ENCODE measurements at regions of chr19 and their contacts with region 1.

Region 1: GRCh38 chr19:30682999-30683536 is 310.9 kb downstream of the ZNF536 start:
- DNase-seq: peak; percentile 69 to 88 (median 88)
- ATAC-seq: peak; percentile 60 to 85
- H3K4me3 ChIP-seq: no peak overlapping the region
- H3K27ac ChIP-seq: no peak overlapping the region
- H3K4me1 ChIP-seq: no peaks in the 10 kb centered on the region
- H3K27me3 ChIP-seq: no peaks in the 10 kb centered on the region

Region 2: GRCh38 chr19:30471441-30471840 is 211.6 kb before region 1 on chr19:
- intact Hi-C with region 1: no loop called
- DNase-seq: no peak
- ATAC-seq: no peak
- H3K4me3 ChIP-seq: no peak overlapping the region
- H3K27ac ChIP-seq: no peak overlapping the region
- H3K4me1 ChIP-seq: no peaks in the 10 kb centered on the region
- H3K27me3 ChIP-seq: no peaks in the 10 kb centered on the region

Region 3: DNA sequence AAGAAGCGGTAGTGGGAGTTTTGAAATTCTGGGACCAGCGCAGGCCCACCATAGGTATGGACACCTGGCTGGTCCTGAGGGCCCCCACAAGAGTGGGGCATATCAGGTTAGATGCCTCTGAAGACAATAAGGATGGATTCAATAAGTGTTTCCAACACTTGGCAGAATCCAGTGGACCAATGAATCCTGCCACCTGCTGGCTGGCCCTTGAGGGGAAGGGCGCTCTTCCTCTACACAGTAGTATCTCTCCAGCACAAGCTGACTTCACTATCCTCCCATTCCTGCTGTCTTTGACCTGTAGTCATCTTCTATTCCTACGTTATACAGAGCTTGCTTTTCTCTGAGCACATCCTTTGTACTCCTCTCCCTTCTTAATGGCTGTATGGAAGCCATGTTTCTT is 865.9 kb after region 1 on chr19:
- intact Hi-C with region 1: loop called in 2 of 4 experiments (anchors 5 to 10 kb)
- DNase-seq: peak; percentile 27 to 59 (median 56)
- ATAC-seq: no peak
- H3K4me3 ChIP-seq: no peak overlapping the region
- H3K27ac ChIP-seq: no peak overlapping the region
- H3K4me1 ChIP-seq: no peaks in the 10 kb centered on the region
- H3K27me3 ChIP-seq: no peaks in the 10 kb centered on the region

Region 4: DNA sequence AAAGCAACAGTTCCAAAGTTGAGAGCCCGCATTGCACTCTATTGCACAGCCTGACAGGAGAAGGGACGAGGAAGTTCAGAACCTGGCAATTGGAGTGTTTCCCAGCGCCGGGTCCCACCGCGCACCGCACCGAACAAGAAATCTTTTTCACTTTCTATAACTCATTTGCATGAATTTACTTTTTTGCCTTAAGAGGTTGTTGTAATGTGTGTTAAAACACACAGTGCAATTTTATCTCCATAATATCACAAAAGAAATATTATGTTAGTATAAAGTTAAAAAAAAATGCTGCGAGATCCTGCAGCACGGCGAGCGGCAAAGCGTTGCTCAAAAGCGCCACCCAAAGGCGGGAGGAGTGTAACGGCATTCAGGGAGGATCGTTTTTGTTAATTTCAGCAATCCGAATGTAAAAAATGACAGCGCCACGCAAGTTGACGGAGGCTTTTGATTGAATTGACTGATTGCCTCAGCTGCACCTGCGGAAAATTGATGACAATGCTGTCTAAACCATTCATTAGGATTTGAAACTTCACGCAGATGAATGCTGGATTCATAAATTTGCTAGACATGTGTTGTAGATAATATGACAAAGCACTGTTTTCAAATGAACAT is 1358.7 kb after region 1 on chr19:
- intact Hi-C with region 1: loop called in 2 of 4 experiments (anchors 10 kb)
- DNase-seq: peak; percentile 44 to 65 (median 58)
- ATAC-seq: no peak
- H3K4me3 ChIP-seq: peak overlapping the region; percentile 3
- H3K27ac ChIP-seq: no peak overlapping the region
- H3K4me1 ChIP-seq: no peaks in the 10 kb centered on the region
- H3K27me3 ChIP-seq: no peaks in the 10 kb centered on the region

Region 5: DNA sequence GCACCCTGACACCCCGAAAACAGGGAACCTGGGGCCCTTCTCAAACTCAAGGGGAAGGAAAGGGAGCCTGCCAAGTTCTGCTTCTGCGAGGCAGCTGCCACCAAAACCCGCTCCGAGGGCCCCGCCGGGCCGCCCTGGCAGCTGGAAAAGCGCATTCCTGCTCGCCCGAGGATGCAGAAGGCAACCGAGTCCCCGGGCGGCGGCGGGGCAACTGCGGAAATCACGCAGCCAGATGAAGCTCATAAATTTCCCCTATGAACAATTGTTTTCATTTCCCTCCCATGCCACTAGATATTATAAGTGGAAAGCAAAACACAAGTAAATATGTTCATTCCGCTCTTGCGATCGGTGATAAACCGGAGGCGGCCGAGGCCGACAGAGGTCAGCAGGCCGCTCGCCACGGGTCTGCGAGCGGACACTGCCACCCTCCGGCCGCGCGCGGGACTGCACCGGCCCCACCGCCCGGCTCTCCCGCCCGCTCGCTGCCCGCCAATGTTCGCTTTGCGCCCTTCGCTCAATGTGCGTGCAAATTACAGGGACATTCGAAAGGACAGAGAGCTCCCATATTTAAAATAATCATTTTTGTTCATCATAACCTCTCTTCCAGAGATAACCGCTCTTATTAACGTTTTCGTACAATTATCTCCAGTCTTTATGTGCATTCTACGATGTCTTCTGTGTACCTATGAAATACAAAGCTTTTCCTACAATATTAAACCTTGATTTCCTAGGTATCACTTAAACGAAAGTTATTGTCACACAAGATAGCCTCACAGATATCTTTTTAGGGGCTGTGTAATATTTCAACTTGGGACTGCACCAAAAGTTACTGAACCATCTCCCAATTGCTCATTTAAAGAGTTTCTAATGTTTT is 1541.5 kb after region 1 on chr19:
- intact Hi-C with region 1: loop called in 3 of 4 experiments (anchors 5 kb)
- DNase-seq: peak; percentile 64 to 85 (median 85)
- ATAC-seq: peak; percentile 84 to 92
- H3K4me3 ChIP-seq: peak overlapping the region; percentile 11
- H3K27ac ChIP-seq: no peak overlapping the region
- H3K4me1 ChIP-seq: no peaks in the 10 kb centered on the region
- H3K27me3 ChIP-seq: no peaks in the 10 kb centered on the region

Measured in right cardiac atrium (tissue), 5 donors.